Lower leg skin (tissue), 4 donors: ENCODE measurements at regions of chr17 and their contacts with region 1.

Region 1: DNA sequence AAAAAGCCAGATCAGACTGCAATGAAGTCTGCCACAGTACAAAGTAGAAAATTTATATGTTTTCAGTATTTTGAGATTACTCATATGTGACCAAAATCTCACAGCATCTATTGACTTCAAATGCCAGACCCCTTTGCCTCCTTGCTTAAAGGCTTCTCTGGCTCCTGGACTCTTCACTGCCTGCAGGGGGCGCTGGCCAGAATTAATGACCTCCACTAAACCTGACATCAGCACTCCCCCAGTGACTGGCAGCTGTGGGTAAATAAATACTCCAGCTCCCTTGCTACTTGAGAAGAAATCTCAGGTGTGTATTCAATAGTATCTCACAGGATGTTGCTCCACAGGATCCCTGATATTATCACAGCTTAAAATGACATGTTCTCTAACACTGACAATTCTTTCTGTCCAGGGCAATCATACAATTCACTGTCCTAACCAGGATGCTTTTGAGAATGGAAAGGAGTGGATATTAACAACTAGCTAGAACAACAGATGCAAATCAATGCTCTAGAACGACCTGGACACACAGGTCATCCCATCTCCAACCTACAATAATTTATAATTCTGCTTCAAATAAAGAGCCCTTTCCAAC is 4.0 kb downstream of the BECN1 start:
- DNase-seq: no peak
- H3K4me3 ChIP-seq: no peak overlapping the region
- CTCF ChIP-seq: no peak
- POLR2A ChIP-seq: no peak

Region 2: DNA sequence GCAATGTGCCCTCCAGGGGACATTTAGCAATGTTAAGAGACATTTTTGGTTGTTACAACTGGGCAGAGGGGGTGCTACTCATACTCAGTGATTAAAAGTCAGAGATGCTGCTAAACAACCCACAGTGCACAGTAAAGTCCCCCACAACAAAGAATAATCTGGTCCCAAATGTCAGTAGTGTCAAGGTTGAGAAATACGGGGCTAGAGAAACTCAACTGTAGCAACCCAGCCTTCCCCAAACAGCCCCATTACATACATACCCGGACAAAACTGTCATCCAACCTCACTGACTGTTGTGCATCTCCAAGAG is 823.2 kb before region 1 on chr17:
- intact Hi-C with region 1: loop called (anchors 5 kb)
- DNase-seq: no peak
- H3K4me3 ChIP-seq: no peak overlapping the region
- CTCF ChIP-seq: no peak
- POLR2A ChIP-seq: no peak

Region 3: GRCh38 chr17:42667123-42667951 is 152.7 kb before region 1 on chr17:
- intact Hi-C with region 1: no loop called
- DNase-seq: no peak
- H3K4me3 ChIP-seq: no peak overlapping the region
- CTCF ChIP-seq: no peak
- POLR2A ChIP-seq: no peak

Region 4: GRCh38 chr17:42720996-42721583 is 99.0 kb before region 1 on chr17:
- intact Hi-C with region 1: loop called (anchors 10 kb)
- DNase-seq: no peak
- H3K4me3 ChIP-seq: no peak overlapping the region
- CTCF ChIP-seq: no peak
- POLR2A ChIP-seq: no peak